ENCODE measurements at regions of chr14 and their contacts with region 1.

Region 1: DNA sequence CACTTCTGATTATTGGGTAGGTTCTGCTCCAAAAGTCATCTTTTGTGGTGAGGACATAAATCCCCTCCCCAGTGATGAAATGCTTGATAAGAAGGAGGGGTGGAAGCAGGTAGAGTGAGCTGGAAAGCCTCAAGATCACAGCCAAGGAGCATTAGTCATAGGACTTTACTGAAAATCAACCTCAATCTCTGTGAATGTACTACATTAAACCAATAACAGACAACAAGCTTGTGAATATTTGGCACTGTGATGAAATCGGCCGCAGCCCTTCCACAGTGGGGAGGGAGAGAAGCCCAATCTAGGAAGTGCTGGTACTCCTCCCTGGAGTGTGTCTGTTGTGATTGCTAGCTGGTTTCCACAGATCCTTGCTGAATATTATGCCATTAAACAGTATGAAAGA is 41.2 kb upstream of the PTCSC3 start:
- DNase-seq: peak; percentile 64
- H3K4me3 Mint-ChIP-seq: no peak overlapping the region
- H3K27ac Mint-ChIP-seq: no peak overlapping the region
- H3K4me1 Mint-ChIP-seq: peaks cover 14% of the 10 kb centered on the region
- H3K27me3 Mint-ChIP-seq: no peaks in the 10 kb centered on the region
- CTCF ChIP-seq: no peak

Region 2: DNA sequence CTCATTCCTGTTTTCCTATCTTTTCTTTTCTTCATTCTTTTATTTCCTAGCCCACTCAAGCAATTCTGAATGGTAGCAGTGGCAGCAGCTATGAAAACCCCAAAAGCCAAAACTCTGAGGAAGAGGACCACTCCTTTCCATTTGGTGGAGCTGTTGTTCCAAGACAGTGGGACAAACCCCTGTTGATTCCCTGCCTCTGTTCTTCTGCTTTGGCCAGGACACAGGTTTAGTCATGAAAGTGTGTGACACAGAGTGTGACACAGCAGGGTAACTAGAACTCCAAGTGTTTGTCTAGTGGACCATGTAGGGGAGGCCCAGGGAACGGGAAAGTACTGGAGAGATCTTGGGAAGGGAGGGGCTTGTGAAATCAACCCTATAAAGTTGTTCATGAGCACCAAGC is 112.3 kb before region 1 on chr14:
- CTCF ChIA-PET with region 1: no interaction called
- POLR2A ChIA-PET with region 1: no interaction called
- intact Hi-C with region 1: loop called (anchors 10 kb)
- DNase-seq: peak; percentile 58
- H3K4me3 Mint-ChIP-seq: no peak overlapping the region
- H3K27ac Mint-ChIP-seq: no peak overlapping the region
- H3K4me1 Mint-ChIP-seq: no peaks in the 10 kb centered on the region
- H3K27me3 Mint-ChIP-seq: peaks cover 2% of the 10 kb centered on the region
- CTCF ChIP-seq: no peak

Region 3: DNA sequence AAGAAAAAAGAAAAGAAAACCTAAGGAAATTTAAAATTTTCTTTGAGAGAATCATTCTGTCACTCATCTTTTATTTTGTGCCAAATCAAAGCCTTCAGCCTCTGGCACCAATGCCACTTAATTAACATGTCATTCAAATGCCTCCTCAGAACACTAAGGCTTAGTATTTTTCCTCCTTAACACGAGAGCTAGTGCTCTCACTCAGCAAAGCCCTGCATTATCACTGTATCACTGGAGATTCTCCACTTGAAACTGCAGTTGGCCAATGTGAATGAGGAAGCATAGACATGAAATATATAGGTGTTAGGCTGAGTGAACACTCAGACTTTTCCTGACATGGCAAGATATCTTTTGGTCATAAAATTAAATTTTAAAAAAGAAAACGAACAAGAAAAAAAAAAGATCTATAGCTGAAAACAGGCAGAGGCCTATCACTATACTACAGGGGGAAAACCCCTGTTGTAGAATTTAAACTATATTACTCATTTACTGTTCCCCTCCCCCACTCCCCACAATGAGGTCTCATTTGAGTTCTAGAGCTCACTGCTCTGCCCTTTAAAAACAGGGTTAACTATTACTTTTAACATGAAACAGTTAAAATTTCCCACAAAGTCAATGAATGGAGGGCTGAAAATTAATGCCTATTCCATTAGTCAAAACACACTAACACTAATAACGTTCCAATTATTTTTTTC is 97.6 kb after region 1 on chr14:
- CTCF ChIA-PET with region 1: no interaction called
- POLR2A ChIA-PET with region 1: interaction called, 9 read pairs
- intact Hi-C with region 1: loop called (anchors 10 kb)
- DNase-seq: no peak
- H3K4me3 Mint-ChIP-seq: no peak overlapping the region
- H3K27ac Mint-ChIP-seq: no peak overlapping the region
- H3K4me1 Mint-ChIP-seq: peaks cover 10% of the 10 kb centered on the region
- H3K27me3 Mint-ChIP-seq: no peaks in the 10 kb centered on the region
- CTCF ChIP-seq: no peak

Measured in MCF 10A (cell line).